ENCODE measurements at regions of chr13 and their contacts with region 1.

Region 1: GRCh38 chr13:80923907-80924306 is 583.0 kb upstream of the SPRY2 start:
- DNase-seq: no peak
- H3K4me3 Mint-ChIP-seq: no peak overlapping the region
- H3K27ac Mint-ChIP-seq: no peak overlapping the region
- H3K4me1 Mint-ChIP-seq: no peaks in the 10 kb centered on the region
- H3K27me3 Mint-ChIP-seq: no peaks in the 10 kb centered on the region

Region 2: DNA sequence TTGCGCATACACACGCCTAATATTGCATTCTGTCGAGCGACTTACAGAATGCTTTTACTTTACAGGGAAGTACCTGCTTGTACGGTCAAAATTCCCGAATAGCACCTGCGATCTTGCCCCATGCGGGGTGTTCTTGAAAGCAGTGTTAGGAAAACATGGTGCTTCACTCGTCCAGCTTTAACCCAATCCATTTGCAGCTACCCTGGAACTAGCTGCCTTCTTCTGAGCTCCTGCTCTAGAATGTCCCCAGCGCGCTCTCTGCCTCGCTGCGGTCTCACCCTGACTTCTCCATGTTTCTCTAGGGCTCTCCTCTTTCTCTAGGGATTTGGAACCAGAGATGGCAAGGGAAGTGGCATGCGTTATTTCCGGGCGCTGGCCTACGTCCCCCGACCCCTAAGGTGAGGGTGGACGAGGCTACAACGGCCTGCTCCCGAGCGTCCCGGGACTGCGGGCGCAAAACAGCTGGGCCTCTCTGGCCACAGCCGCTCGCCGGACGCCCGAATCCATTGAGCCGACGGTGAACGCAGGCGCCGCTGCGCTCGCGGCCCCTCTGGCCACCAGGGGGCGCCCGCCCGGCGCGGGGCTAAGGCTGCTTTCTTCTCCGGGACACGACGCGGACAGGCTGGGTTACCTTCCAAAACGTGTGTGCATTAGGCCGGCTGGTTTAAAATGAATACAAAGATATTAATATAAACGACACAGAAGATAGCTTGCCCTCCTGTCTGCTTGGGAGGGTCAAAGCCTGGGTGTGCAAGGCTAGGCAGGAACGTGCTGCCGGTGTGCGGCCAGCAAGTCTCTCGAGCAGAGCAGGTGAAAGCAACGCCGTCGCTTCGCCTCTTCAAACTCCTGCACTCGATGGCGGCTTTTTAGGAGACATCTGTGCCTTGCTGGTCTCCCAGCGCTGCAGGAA is 581.2 kb before region 1 on chr13:
- intact Hi-C with region 1: loop called (anchors 5 kb)
- DNase-seq: peak; percentile 91
- H3K4me3 Mint-ChIP-seq: peak overlapping the region; percentile 72
- H3K27ac Mint-ChIP-seq: no peak overlapping the region
- H3K4me1 Mint-ChIP-seq: peaks cover 8% of the 10 kb centered on the region
- H3K27me3 Mint-ChIP-seq: peaks cover 39% of the 10 kb centered on the region

Measured in activated CD4-positive, alpha-beta T cell treated with anti-CD3 and anti-CD28 coated beads, Interleukin-2, amount 10 ng/mL, durations not matched to agents 24 days and 14 days (primary cell).